ENCODE measurements at regions of chr11 and their contacts with region 1.

Region 1: DNA sequence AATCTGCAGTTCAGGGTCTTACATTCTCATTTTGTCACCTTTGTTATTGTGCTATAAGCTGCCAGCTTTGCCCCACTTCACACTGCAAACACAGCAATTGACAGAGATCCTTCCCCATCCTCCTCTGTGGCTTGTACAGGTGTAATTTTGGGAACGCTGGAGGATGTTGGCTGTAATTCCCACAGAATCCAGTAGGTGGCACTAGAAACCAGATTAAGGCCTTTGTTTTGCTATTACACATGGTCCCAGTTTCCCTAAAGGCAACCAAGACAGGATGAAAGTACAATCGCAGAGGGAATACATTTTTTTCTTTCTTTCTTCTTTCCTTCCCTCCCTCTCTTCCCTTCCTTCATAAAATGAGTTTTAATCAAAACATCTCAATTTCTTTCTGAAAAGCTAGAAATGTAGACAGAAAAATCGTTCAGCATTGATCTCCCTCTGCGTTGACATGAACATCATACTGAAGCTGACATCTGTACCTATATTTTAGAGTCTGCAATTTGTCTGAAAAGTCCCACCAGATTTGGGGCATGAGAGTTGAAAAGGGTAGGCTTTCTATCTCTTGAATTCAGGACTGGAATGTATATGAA is 21.3 kb upstream of the NELL1 start:
- DNase-seq: no peak
- H3K4me3 ChIP-seq: no peak overlapping the region
- H3K27ac ChIP-seq: no peak overlapping the region
- H3K4me1 ChIP-seq: no peaks in the 10 kb centered on the region
- H3K27me3 ChIP-seq: peaks cover 0 to 6% (median 0%) of the 10 kb centered on the region in 3 donors
- CTCF ChIP-seq: peak in 3 of 4 experiments; percentile 68 to 88 (median 86)
- EP300 ChIP-seq: no peak
- POLR2A ChIP-seq: no peak

Region 2: GRCh38 chr11:20089796-20090653 is 558.0 kb before region 1 on chr11:
- intact Hi-C with region 1: no loop called
- DNase-seq: no peak
- H3K4me3 ChIP-seq: no peak overlapping the region
- H3K27ac ChIP-seq: peak overlapping the region in 2 of 4 donors; percentile 2 to 5
- H3K4me1 ChIP-seq: peaks cover 0 to 13% (median 4%) of the 10 kb centered on the region in 4 donors
- H3K27me3 ChIP-seq: no peaks in the 10 kb centered on the region
- CTCF ChIP-seq: no peak
- EP300 ChIP-seq: no peak
- POLR2A ChIP-seq: no peak

Region 3: GRCh38 chr11:22130462-22131053 is 1482.5 kb after region 1 on chr11:
- intact Hi-C with region 1: loop called (anchors 5 kb)
- DNase-seq: no peak
- H3K4me3 ChIP-seq: no peak overlapping the region
- H3K27ac ChIP-seq: no peak overlapping the region
- H3K4me1 ChIP-seq: no peaks in the 10 kb centered on the region
- H3K27me3 ChIP-seq: no peaks in the 10 kb centered on the region
- CTCF ChIP-seq: no peak
- EP300 ChIP-seq: no peak
- POLR2A ChIP-seq: no peak

Region 4: GRCh38 chr11:22304337-22304961 is 1656.4 kb after region 1 on chr11:
- intact Hi-C with region 1: loop called (anchors 5 kb)
- DNase-seq: no peak
- H3K4me3 ChIP-seq: no peak overlapping the region
- H3K27ac ChIP-seq: no peak overlapping the region
- H3K4me1 ChIP-seq: no peaks in the 10 kb centered on the region
- H3K27me3 ChIP-seq: no peaks in the 10 kb centered on the region
- CTCF ChIP-seq: peak in 3 of 4 experiments; percentile 35 to 75 (median 40)
- EP300 ChIP-seq: no peak
- POLR2A ChIP-seq: no peak